K562 (cell line): ENCODE measurements at regions of chr16 and their contacts with region 1.

Region 1: DNA sequence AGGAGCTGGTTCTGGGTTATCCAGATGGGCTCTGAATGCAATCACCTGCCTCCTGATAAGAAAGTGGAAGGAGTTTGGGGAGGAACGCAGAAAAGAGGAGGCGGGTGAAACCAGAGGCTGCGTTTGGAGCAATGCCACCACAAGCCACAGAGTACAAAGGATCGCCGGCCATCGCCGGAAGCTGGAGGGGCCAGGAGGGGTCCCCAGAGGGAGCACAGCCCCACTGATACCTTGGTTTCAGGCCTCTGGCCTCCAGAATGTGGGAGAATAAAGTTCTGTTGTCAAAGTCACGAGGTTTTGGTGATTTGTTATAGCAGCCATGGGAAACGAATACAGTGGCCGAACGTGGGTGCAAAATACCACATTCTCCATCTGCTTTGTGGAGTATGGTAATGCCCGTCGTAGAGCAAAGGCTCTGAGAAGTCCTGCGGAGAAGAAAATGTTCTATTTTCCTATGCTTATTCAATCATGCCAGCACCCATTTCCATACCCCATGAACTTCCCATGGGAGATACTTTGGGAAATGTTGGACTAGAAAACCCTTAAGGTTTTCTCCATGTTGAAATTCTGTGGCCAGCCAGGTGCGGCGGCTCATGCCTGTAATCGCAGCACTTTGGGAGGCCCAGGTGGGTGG is 51.4 kb downstream of the ZDHHC7 start:
- DNase-seq: peak in 3 of 4 experiments; percentile 47 to 63 (median 60)
- ATAC-seq: no peak
- H3K4me3 ChIP-seq: no peak overlapping the region
- H3K27ac ChIP-seq: no peak overlapping the region
- H3K4me1 ChIP-seq: peaks cover 3 to 23% of the 10 kb centered on the region in 2 experiments; a peak in 2 of 5 replicates
- H3K27me3 ChIP-seq: peaks cover 14 to 19% of the 10 kb centered on the region in 2 experiments; a peak in 3 of 5 replicates
- CTCF ChIP-seq: no peak
- EP300 ChIP-seq: no peak
- POLR2A ChIP-seq: no peak
- RAD21 ChIP-seq: no peak

Region 2: GRCh38 chr16:84925092-84925772 is 34.7 kb before region 1 on chr16:
- CTCF ChIA-PET with region 1: interaction called, 21 read pairs
- POLR2A ChIA-PET with region 1: interaction called, 3 read pairs
- in situ Hi-C with region 1: no loop called
- intact Hi-C with region 1: loop called (anchors 2 kb)
- DNase-seq: peak; percentile 85 to 88 (median 86)
- ATAC-seq: peak; percentile 90
- H3K4me3 ChIP-seq: no peak overlapping the region
- H3K27ac ChIP-seq: no peak overlapping the region
- H3K4me1 ChIP-seq: peaks cover 10 to 54% of the 10 kb centered on the region in 2 experiments
- H3K27me3 ChIP-seq: peaks cover 3 to 10% of the 10 kb centered on the region in 2 experiments; a peak in 2 of 5 replicates
- CTCF ChIP-seq: peak; percentile 95 to 99 (median 97)
- EP300 ChIP-seq: no peak
- POLR2A ChIP-seq: no peak
- RAD21 ChIP-seq: peak; percentile 98 to 99